Left cardiac atrium (tissue), 4 donors: ENCODE measurements at regions of chr6 and their contacts with region 1.

Region 1: GRCh38 chr6:29705389-29706231 is 17.6 kb upstream of the HLA-F start:
- DNase-seq: no peak
- ATAC-seq: peak; percentile 54 to 75

Region 2: GRCh38 chr6:29035951-29036350 is 669.7 kb before region 1 on chr6:
- intact Hi-C with region 1: no loop called
- DNase-seq: no peak
- ATAC-seq: no peak

Region 3: GRCh38 chr6:29759457-29759856 is 53.8 kb after region 1 on chr6:
- intact Hi-C with region 1: loop called in 1 of 2 experiments (anchors 5 kb)
- DNase-seq: no peak
- ATAC-seq: no peak

Region 4: DNA sequence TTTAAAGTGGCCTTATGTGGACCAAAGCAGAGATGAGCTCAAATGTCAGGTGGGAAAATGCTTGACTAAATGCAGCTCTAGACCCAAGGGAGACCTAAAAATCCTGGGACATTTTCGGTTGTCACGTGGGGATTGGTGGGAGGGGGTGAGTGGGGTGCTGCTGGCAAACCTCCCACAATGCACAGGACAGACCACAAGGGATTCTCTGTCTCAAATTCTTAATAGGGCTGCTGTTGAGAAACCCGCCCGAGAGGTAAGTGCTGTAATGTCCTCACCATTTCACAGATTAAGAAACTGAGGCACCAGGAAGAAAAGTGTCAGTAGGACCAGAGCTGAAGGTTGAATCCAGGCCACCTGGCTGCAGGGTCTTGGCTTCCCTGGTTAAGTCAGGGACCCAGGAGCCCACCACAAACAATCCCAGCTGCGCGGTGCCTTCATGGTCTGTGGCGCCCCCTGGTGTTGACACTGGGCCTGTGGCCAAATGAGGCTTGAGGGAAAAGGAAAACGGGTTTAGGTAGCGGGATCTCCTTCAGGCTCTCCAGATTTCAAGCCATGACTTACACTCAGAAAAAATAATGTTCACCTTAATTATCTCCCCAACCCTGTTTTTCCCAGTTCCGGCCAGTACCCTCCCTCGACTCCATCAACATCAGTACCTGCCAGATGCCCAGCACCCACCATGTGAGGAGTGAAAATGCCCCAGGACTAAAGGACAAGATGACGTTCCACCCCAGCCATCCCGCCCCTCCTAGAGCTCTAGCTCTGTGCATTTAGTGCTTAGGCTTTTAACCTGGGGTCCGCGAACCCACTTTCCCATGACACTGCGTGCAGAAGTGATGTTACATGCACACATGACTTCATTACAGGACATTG is 129.2 kb after region 1 on chr6:
- intact Hi-C with region 1: loop called (anchors 2 to 5 kb)
- DNase-seq: peak; percentile 42
- ATAC-seq: peak; percentile 53 to 60

Region 5: GRCh38 chr6:30013291-30013922 is 307.8 kb after region 1 on chr6:
- intact Hi-C with region 1: loop called (anchors 10 kb)
- DNase-seq: no peak
- ATAC-seq: peak in 1 of 2 donors; percentile 61